Activated T-helper 2 cell treated with anti-CD3 and anti-CD28 coated beads, Interferon-gamma antibody, Interleukin-2, Interleukin-4, amounts not matched to agents 10 μg/mL and 5 μg/mL and 100 μg/mL, durations not matched to agents 14 hours and 24 hours and 36 hours (primary cell): ENCODE measurements at regions of chr2 and their contacts with region 1.

Region 1: DNA sequence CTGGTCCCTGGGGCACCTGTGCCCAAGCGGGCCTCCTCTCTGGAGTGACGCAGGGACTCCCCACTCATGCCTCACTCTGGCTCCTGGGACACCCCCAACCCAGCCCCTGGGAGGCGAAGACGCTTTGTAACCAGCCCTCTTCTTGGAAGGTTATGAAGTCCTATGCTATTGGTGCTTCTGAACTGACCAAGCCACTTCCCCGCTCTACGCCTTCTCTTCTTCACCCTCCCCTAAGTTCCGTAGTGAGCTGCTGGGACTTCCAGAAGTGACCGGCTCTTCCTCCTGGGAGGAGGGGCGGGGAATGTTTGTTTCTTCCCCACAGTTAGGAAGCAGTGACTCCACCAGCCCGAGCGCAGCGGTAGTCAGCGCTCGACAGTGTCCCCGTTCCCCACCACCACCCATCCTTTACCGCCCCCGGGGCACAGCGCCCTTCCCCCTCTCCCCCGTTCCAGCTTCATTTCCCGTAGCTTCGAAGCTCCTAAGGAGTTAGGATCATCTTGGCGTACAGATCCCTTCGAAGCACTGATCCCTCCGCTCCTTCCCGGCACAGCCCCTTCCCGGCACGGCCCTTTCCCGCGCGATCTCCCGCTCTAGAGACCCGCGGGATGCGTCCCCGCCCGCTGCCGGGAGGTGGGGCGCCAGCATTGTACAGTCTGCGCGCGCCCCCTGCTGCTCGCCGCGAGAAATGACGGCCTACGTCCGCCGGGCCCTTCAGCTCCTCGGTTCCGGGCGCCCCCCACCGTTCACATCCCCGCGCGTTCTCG is 25.3 kb upstream of the NOTO start:
- DNase-seq: peak; percentile 79
- H3K4me3 Mint-ChIP-seq: peak overlapping the region; percentile 81
- H3K27ac Mint-ChIP-seq: no peak overlapping the region
- H3K4me1 Mint-ChIP-seq: peaks cover 21% of the 10 kb centered on the region
- H3K27me3 Mint-ChIP-seq: peaks cover 56% of the 10 kb centered on the region

Region 2: GRCh38 chr2:72887754-72888437 is 289.2 kb before region 1 on chr2:
- intact Hi-C with region 1: loop called (anchors 1 kb)
- DNase-seq: peak; percentile 36
- H3K4me3 Mint-ChIP-seq: peak overlapping the region; percentile 77
- H3K27ac Mint-ChIP-seq: no peak overlapping the region
- H3K4me1 Mint-ChIP-seq: peaks cover 1% of the 10 kb centered on the region
- H3K27me3 Mint-ChIP-seq: peaks cover 24% of the 10 kb centered on the region

Region 3: DNA sequence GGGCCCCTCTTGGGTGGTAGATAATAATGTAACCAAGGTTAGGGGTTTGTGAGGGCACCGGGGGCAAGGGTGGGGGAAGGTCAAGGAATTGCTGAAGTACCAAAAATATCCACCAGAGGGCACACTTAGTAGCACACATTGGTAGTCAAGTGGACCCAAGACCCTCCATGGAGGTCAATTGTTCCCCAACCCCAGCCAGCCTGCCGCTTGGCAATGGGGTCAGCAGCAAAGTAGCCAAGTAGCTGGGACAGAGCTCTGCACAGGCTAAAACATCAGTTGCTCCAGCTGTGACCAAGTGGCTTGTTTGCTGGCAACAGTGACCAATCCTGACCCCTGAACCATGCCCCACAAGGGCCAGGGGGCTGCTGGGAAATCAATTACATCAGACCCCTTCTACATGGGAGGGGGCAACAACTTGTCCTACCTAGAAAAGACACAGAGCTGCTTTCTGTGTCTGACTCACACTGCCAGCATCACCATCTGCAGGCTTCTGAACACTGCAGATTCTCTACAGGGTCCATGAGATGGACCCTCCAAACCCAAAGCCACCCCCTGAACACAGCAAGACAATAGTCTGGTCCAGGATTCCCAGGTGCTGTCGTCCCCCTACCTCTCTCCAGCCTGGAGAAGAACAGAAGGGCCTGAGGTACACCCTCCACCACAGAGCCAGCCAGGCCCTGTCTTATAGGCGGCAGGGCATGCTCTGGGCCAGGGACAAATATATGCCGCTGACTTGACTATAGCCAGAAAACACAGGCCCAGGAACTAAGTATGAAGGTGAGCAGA is 183.7 kb before region 1 on chr2:
- intact Hi-C with region 1: loop called (anchors 1 kb)
- DNase-seq: peak; percentile 21
- H3K4me3 Mint-ChIP-seq: no peak overlapping the region
- H3K27ac Mint-ChIP-seq: no peak overlapping the region
- H3K4me1 Mint-ChIP-seq: no peaks in the 10 kb centered on the region
- H3K27me3 Mint-ChIP-seq: no peaks in the 10 kb centered on the region

Region 4: DNA sequence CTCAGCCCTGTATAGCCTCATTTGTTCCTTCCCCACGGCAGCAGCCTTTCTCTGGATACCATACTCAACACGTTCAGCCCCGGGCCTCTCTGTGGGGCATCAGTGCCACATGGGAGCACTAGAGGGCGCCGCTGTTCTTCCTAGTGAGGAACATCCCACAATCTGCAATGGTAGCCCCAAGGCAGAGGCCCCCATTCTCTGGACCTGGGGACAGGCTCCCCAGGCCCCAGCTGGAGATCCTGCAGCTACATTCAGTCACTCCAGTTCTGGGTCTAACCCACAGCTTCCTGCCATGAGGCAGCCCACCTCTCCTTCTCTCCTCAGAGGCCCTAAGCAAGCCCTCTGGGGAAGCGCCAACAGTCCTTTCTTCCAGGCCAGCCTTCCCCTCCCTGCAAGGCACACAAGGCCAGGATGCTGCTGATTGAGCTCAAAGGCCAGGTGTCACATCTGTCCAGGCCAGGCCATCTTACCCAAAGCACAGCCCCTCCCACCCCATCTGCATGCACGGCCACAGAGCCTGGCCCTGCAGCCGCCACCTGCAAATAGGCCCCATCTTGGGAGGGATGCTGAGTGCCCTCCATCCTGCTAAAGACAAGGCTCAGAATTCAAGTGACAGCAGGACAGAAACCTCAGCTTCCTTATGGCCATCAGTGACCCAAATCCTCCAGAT is 91.2 kb before region 1 on chr2:
- intact Hi-C with region 1: loop called (anchors 1 kb)
- DNase-seq: peak; percentile 72
- H3K4me3 Mint-ChIP-seq: no peak overlapping the region
- H3K27ac Mint-ChIP-seq: no peak overlapping the region
- H3K4me1 Mint-ChIP-seq: peaks cover 2% of the 10 kb centered on the region
- H3K27me3 Mint-ChIP-seq: no peaks in the 10 kb centered on the region

Region 5: DNA sequence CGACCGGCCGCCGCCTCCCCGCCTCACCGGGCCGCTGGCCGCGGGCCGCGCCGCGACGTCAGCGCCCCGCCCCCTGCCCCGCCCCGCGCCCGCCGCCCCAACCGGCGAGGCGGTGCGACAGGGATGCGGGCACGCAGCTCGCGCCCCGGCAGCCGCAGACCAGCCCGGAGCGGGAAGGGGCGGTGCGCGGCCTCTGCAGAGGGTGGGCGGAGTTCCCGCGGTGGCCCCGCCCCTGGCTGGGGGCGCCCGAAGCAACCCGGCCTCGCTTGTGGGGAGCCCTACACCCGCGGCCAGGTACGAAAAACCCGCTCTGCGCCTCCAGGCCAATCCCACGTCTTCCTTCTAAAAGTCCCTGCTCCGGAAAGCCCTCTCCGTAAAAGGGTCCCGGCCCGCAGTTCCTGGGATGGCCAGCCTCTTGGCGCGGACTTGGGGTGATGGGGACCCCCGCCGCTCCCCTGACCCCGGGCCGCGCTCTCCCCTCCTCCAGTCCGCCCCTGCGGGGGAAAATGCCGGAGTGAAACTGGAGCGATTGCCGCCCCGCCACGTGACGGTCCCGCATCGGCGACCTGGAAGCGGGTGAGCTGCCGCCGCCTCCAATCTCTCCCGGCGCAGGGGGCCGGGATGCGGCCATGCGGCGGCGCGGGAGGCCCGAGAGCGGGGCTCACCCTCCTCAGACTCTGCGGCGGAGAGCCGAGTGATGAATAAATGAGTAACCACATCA is 64.0 kb before region 1 on chr2 and contains the start of gene RAB11FIP5:
- intact Hi-C with region 1: loop called (anchors 1 kb)
- DNase-seq: peak; percentile 73
- H3K4me3 Mint-ChIP-seq: peak within 1 kb of the TSS; percentile 83
- H3K27ac Mint-ChIP-seq: peak within 1 kb of the TSS; percentile 46
- H3K4me1 Mint-ChIP-seq: peaks cover 21% of the 10 kb centered on the region
- H3K27me3 Mint-ChIP-seq: peaks cover 20% of the 10 kb centered on the region
- total RNA-seq, gene RAB11FIP5: 10.7 and 11.7 TPM in 2 replicates

Region 6: GRCh38 chr2:73134471-73134870 is 42.6 kb before region 1 on chr2:
- intact Hi-C with region 1: no loop called
- DNase-seq: no peak
- H3K4me3 Mint-ChIP-seq: no peak overlapping the region
- H3K27ac Mint-ChIP-seq: no peak overlapping the region
- H3K4me1 Mint-ChIP-seq: no peaks in the 10 kb centered on the region
- H3K27me3 Mint-ChIP-seq: peaks cover 12% of the 10 kb centered on the region

Region 7: GRCh38 chr2:73212448-73213176 is 35.5 kb after region 1 on chr2:
- intact Hi-C with region 1: loop called (anchors 1 kb)
- DNase-seq: peak; percentile 64
- H3K4me3 Mint-ChIP-seq: no peak overlapping the region
- H3K27ac Mint-ChIP-seq: no peak overlapping the region
- H3K4me1 Mint-ChIP-seq: peaks cover 26% of the 10 kb centered on the region
- H3K27me3 Mint-ChIP-seq: peaks cover 17% of the 10 kb centered on the region